HCT116 (cell line): ENCODE measurements at regions of chr17 and their contacts with region 1.

Region 1: GRCh38 chr17:28252436-28252835 is 66.6 kb upstream of the TMEM97 start:
- DNase-seq: no peak
- ATAC-seq: no peak
- H3K4me3 ChIP-seq: no peak overlapping the region
- H3K27ac ChIP-seq: no peak overlapping the region
- H3K4me1 ChIP-seq: peaks cover 8 to 20% of the 10 kb centered on the region in 2 experiments
- H3K27me3 ChIP-seq: no peaks in the 10 kb centered on the region
- CTCF ChIP-seq: no peak
- POLR2A ChIP-seq: no peak
- RAD21 ChIP-seq: no peak

Region 2: GRCh38 chr17:27657620-27658019 is 594.8 kb before region 1 on chr17:
- CTCF ChIA-PET with region 1: no interaction called
- POLR2A ChIA-PET with region 1: no interaction called
- RAD21 ChIA-PET with region 1: no interaction called
- intact Hi-C with region 1: no loop called
- DNase-seq: no peak
- ATAC-seq: no peak
- H3K4me3 ChIP-seq: no peak overlapping the region
- H3K27ac ChIP-seq: no peak overlapping the region
- H3K4me1 ChIP-seq: peaks cover 3 to 6% of the 10 kb centered on the region in 2 experiments; a peak in 2 of 4 replicates
- H3K27me3 ChIP-seq: no peaks in the 10 kb centered on the region
- CTCF ChIP-seq: no peak
- POLR2A ChIP-seq: no peak
- RAD21 ChIP-seq: no peak

Region 3: DNA sequence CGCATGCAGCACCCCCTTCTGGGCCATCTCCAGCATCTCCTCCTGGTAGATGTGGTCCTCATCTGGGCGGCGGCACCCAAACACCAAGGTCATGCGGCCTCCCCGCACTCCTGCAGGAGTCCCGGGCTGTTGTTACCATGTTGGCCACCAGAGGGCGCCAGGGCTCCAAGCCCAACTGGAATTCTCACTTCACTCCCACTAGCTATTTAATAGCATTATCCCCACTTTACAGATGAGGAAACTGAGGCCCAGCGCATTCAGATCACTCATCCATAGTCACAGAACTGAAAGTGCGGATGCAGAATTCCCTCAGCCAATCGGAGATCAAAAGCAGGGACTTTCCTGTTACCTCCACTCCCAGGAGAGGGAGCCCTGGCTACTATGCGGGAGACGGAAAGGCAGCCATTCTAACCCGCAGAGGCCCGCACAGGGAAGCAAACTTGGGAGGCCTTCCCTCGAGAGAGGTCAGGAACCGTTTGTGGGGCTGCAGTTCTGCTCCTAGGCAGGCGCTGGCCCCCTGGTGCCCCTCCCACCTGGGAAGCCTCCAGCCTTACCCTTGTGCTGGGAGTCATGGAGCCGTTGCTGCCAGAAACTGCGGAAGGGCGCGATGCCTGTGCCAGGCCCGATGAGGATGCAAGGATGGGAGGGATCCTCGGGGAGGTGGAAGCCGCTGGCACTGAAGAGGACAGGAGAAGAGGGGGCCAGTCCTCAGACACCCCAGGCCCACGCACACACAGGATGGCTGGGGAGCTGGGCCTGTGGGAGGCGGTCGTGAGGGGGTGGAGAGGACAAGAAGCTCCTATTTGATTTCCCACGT is 492.2 kb before region 1 on chr17:
- CTCF ChIA-PET with region 1: interaction called, 17 read pairs
- POLR2A ChIA-PET with region 1: no interaction called
- RAD21 ChIA-PET with region 1: no interaction called
- intact Hi-C with region 1: loop called (anchors 2 kb)
- DNase-seq: peak; percentile 24
- ATAC-seq: peak; percentile 86
- H3K4me3 ChIP-seq: no peak overlapping the region
- H3K27ac ChIP-seq: no peak overlapping the region
- H3K4me1 ChIP-seq: no peaks in the 10 kb centered on the region
- H3K27me3 ChIP-seq: no peaks in the 10 kb centered on the region; the same call in none of the 2 replicates
- CTCF ChIP-seq: peak; percentile 92 to 94 (median 93)
- POLR2A ChIP-seq: no peak
- RAD21 ChIP-seq: peak; percentile 77

Region 4: GRCh38 chr17:27805520-27806146 is 446.8 kb before region 1 on chr17:
- CTCF ChIA-PET with region 1: interaction called, 11 read pairs
- POLR2A ChIA-PET with region 1: no interaction called
- RAD21 ChIA-PET with region 1: interaction called in 1 of 2 experiments, 5 read pairs
- intact Hi-C with region 1: loop called (anchors 1 kb)
- DNase-seq: peak; percentile 83
- ATAC-seq: peak; percentile 98
- H3K4me3 ChIP-seq: peak overlapping the region; percentile 19 to 43
- H3K27ac ChIP-seq: no peak overlapping the region
- H3K4me1 ChIP-seq: peaks cover 6 to 8% of the 10 kb centered on the region in 2 experiments
- H3K27me3 ChIP-seq: no peaks in the 10 kb centered on the region
- CTCF ChIP-seq: peak; percentile 62 to 87 (median 85); a peak in 5 of 6 replicates
- POLR2A ChIP-seq: no peak
- RAD21 ChIP-seq: peak; percentile 82

Region 5: DNA sequence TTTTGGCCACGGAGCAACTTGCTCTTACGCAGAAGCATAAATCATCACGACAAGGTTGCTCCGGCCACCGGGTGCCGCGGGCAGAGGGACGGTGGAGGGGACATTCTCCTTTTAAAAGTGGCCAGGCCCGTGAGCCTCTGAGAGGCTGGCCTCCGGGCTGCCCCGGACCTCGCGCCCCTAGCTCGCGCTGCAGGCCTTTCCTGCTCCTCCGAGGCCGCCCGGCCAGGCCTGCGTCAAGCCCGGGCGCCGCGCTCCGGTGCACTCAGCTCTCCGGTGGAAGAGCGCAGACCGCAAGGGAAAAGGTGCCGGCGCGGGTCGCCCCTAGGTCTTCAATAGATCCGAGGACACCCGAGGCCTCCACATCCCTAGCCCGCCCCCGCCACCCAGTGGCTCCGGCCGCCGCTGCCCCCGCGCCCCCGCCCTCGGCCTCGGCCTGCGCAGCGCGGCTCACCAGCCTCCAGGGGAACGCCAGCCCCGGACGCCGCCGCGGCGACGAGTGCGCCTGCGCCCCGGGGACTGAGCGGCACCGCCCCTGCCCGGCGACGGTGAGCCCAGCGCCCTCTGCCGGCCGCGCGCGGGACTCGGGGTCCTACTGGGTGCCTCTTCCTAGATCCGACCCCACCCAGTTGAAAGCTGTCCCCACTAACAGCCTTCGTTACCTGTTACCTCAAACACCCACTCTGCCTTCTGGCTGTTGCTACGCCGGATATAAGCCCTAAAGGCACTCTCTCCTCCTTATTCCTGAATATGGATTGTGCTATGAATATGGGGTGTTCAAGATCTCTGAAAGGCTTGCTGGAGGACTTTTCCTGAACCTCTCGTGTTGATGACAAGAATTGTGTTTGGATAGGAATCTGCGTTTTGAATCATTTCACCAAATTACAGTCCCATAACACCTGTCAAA is 359.3 kb before region 1 on chr17 and contains the start of gene LYRM9:
- CTCF ChIA-PET with region 1: interaction called, 11 read pairs
- POLR2A ChIA-PET with region 1: no interaction called
- RAD21 ChIA-PET with region 1: interaction called in 1 of 2 experiments, 3 read pairs
- intact Hi-C with region 1: loop called (anchors 5 kb)
- DNase-seq: peak; percentile 66
- ATAC-seq: peak; percentile 97
- H3K4me3 ChIP-seq: peak within 1 kb of the TSS; percentile 56 to 67
- H3K27ac ChIP-seq: peak within 1 kb of the TSS; percentile 39; the same call in 1 of the 2 replicates
- H3K4me1 ChIP-seq: peaks cover 25 to 28% of the 10 kb centered on the region in 2 experiments; a peak in 3 of 4 replicates
- H3K27me3 ChIP-seq: no peaks in the 10 kb centered on the region
- CTCF ChIP-seq: peak; percentile 22 to 81 (median 80); a peak in 4 of 6 replicates
- POLR2A ChIP-seq: no peak
- RAD21 ChIP-seq: peak; percentile 48
- total RNA-seq, gene LYRM9: 4.8 TPM

Region 6: DNA sequence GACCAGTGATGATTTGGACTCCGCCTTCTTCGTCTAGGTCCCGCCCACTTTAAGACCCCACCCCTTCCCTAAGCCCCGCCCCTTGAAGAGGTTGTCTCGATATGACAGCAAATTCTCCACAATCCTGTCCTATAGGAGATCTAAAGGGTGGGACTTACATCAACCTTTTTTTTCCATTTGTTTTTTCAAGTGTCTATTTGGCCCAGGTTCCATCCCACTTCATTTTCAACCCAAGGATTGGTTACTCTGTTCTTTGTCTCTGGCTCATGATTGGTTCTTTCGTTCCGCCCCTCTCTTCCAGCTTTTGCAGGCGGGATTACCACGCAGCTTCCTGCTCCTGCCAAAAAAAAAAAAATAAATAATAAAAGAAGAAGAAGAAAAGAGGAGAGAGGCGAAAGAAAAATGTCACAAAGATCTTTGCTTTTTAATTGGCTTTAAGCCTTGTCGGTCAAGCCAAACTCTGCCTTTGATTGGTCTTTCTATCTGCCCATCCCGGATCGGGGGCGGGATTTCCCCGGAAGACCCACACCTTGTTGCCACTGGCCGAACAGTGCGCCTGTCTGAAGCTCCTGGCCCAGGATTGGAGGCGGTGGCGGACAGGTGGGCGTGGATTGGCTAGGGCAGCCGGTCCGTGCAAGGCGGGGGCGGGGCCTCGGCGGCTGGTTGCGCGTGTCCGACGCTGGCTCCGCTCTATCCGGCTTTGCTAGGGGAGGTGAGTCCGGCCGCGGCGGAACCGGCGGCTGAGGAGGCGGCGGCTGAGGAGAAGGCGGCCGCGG is 211.2 kb before region 1 on chr17:
- CTCF ChIA-PET with region 1: no interaction called
- POLR2A ChIA-PET with region 1: no interaction called
- RAD21 ChIA-PET with region 1: no interaction called
- intact Hi-C with region 1: loop called (anchors 1 kb)
- DNase-seq: peak; percentile 98
- ATAC-seq: peak; percentile 97
- H3K4me3 ChIP-seq: peak overlapping the region; percentile 65 to 82
- H3K27ac ChIP-seq: no peak overlapping the region
- H3K4me1 ChIP-seq: peaks cover 4 to 14% of the 10 kb centered on the region in 2 experiments; a peak in 2 of 4 replicates
- H3K27me3 ChIP-seq: no peaks in the 10 kb centered on the region
- CTCF ChIP-seq: no peak
- POLR2A ChIP-seq: no peak
- RAD21 ChIP-seq: no peak

Region 7: GRCh38 chr17:28239271-28239624 is 13.2 kb before region 1 on chr17:
- CTCF ChIA-PET with region 1: interaction called, 10 read pairs
- POLR2A ChIA-PET with region 1: no interaction called
- RAD21 ChIA-PET with region 1: no interaction called
- intact Hi-C with region 1: no loop called
- DNase-seq: no peak
- ATAC-seq: no peak
- H3K4me3 ChIP-seq: no peak overlapping the region
- H3K27ac ChIP-seq: no peak overlapping the region
- H3K4me1 ChIP-seq: peaks cover under 1 to 2% of the 10 kb centered on the region in 2 experiments; a peak in 2 of 4 replicates
- H3K27me3 ChIP-seq: no peaks in the 10 kb centered on the region
- CTCF ChIP-seq: no peak
- POLR2A ChIP-seq: no peak
- RAD21 ChIP-seq: no peak

Region 8: DNA sequence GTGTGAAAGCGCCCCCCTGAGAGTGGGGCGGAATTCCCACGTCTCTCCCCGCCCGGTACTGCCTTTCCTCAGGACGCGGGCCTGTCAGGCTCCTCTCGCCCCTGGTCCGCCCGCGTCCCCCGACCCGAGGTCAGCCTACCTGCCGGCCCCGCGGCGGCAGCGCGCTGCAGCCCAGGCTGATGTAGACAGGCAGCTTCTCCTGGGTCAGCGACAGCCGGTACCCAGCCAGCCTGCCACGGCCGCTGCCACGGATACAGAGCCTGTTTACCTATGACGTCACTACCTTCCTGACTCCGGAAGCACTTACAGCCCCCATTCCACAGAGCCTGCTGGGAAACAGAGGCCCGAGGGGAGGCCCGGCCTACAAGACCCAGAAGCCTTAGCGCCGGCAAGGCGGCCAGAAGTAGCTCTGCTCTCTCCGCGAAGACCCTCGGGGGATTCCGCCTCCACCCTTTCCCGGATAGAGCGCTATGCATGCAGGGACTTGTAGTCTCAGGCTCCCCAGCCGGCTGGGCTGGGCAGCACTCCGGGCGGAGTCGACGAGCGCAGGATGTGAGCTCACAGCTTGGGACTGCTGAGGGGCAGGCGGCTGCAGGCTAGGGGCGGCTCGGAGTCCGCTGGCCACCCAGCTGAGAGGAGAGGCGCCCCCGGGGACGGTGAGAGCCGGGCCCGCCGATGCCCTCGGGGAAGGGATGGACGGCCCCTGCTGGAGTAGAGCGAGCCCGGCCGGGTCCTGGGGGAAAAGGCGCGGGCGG is 82.9 kb after region 1 on chr17 and contains the starts of genes IFT20 and TNFAIP1:
- CTCF ChIA-PET with region 1: interaction called, 11 read pairs
- POLR2A ChIA-PET with region 1: no interaction called
- RAD21 ChIA-PET with region 1: no interaction called
- intact Hi-C with region 1: no loop called
- DNase-seq: peak; percentile 99
- ATAC-seq: peak; percentile 92
- H3K4me3 ChIP-seq: peak within 1 kb of the TSS; percentile 97 to 99
- H3K27ac ChIP-seq: peak within 1 kb of the TSS; percentile 81
- H3K4me1 ChIP-seq: peaks cover 16 to 38% of the 10 kb centered on the region in 2 experiments
- H3K27me3 ChIP-seq: no peaks in the 10 kb centered on the region
- CTCF ChIP-seq: no peak
- POLR2A ChIP-seq: peak; percentile 69
- RAD21 ChIP-seq: no peak
- total RNA-seq, gene IFT20: 21.7 TPM
- total RNA-seq, gene TNFAIP1: 33.4 TPM